ENCODE measurements at regions of chr14 and their contacts with region 1.

Region 1: DNA sequence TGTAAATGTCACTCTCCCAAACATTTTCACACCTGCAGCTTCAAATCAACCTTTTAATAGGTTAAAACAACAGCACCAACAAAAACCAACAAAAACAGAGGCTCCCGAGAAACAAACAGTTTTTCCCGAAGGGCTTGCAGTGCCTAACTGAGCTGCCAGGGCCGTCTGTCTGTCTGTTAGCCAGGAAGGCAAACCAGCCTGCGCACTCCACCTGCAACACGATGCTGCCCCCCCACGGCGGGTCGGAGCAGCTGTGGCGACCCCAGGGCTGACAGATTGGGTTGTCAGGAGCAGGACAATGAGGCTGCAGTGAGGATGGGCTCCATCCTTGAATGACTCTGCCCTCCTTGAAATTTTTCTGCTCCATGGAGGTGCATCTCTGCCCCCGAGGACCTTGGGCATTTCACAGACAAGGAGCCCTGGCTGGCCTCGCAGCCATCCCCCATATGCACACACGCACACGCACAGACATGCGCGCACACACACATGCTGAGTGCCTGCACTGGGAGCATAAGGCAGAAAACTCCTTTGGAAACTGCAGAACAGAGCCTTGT is 2.6 kb downstream of the RTL1 start:
- DNase-seq: peak; percentile 8
- H3K4me3 ChIP-seq: no peak overlapping the region
- H3K27ac ChIP-seq: no peak overlapping the region
- H3K4me1 ChIP-seq: peaks cover 13% of the 10 kb centered on the region
- H3K27me3 ChIP-seq: peaks cover 3 to 6% of the 10 kb centered on the region in 2 experiments
- CTCF ChIP-seq: peak; percentile 8 to 42
- POLR2A ChIP-seq: no peak

Region 2: DNA sequence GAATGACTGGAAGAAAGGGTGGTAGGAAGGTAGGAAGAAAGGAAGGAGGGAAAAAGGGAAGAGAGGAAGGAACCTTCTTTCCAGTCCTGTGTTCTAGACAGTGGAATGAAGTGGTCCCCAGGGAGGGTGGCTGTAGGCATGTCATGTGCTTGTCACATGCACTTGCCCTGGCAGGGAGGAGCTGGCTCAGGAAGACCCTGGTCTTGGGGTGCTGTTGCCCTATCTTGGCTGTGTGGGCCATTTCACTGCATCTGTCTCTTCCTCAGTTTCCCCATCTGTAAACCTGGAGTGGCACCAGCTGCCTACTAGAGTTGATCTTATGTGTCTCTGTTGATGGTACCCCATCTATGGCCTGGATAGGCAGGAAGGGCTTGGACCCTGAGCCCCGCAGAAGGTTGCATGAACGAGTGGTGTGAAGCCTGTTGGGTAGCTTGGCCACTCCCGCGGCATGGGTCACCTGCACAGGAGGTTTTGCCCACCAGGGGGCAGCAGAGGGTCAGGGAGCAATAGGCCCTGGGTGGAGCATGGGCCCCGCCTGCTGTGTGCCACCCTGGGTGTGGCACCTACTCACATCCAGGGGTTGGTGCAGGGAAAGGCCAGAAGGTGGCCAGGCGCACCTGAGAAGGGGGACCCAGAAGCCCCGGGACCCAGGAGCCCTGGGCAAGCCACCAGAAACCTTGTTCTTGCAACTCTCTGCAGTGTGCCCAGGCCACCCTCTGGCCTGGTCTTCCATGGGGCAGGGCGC is 49.9 kb before region 1 on chr14:
- CTCF ChIA-PET with region 1: no interaction called
- POLR2A ChIA-PET with region 1: no interaction called
- dilution Hi-C with region 1: no loop called
- intact Hi-C with region 1: loop called (anchors 2 kb)
- DNase-seq: peak; percentile 32
- H3K4me3 ChIP-seq: no peak overlapping the region
- H3K27ac ChIP-seq: no peak overlapping the region
- H3K4me1 ChIP-seq: no peaks in the 10 kb centered on the region
- H3K27me3 ChIP-seq: no peaks in the 10 kb centered on the region
- CTCF ChIP-seq: peak; percentile 71 to 85
- POLR2A ChIP-seq: no peak

Region 3: GRCh38 chr14:101628471-101628966 is 727.6 kb after region 1 on chr14:
- CTCF ChIA-PET with region 1: no interaction called
- POLR2A ChIA-PET with region 1: no interaction called
- dilution Hi-C with region 1: no loop called
- intact Hi-C with region 1: loop called (anchors 2 kb)
- DNase-seq: peak; percentile 59
- H3K4me3 ChIP-seq: no peak overlapping the region
- H3K27ac ChIP-seq: no peak overlapping the region
- H3K4me1 ChIP-seq: peaks cover 2% of the 10 kb centered on the region
- H3K27me3 ChIP-seq: no peaks in the 10 kb centered on the region
- CTCF ChIP-seq: peak; percentile 93 to 95
- POLR2A ChIP-seq: no peak

Measured in endothelial cell of umbilical vein (primary cell).